ENCODE measurements at regions of chr15 and their contacts with region 1.

Region 1: GRCh38 chr15:80970018-80970658 is 19.5 kb downstream of the MESD start:
- H3K4me3 ChIP-seq: no peak overlapping the region
- H3K27ac ChIP-seq: no peak overlapping the region
- H3K4me1 ChIP-seq: no peaks in the 10 kb centered on the region
- CTCF ChIP-seq: peak; percentile 42; the same call in 1 of the 2 replicates

Region 2: DNA sequence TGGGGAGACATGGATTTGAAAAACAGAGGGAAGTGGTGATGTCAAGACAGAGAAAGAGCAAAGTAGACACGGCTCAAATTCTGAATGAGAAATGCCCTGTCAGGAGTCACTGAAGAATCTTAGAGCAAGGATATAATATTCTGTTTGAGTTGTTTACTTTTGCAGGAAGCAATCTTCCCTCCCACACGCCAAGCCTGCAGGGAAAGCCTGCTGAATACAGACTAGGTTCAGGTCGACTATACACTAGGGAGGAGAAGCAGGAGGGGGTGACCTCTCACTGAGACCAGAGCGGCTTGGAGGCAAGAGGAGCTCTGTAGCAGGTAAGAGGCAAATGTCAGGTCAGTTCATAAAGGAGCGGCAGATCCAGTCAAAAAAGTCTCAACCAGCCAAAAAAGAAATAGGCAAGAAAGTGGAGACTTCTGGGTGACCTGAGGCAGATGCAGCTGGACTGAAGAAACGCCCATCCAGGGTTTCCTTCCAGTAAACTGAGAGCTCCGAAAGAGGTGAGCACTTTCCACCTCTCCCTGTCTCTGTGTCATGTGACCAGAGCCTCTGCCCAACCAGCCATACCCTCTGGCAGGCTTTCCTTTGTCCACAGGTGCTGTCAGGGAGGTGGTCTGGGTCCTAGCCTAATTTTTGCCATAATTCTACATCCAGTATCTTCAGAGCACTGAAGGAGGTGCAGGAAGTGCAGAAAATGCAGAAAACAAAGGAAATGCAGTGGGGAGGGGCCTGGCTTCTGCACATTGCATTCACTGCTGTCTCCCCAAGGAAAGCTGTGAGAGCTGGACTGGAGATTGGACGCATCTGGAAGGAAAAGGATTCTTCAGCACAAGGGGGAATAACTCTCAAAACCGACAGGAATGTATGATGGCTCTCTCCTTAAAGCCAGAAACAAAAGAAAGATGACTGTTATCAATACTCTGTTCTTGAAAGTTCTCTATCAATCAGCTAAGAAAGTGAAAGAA is 680.3 kb before region 1 on chr15:
- CTCF ChIA-PET with region 1: no interaction called
- POLR2A ChIA-PET with region 1: no interaction called
- H3K4me3 ChIP-seq: no peak overlapping the region
- H3K27ac ChIP-seq: no peak overlapping the region
- H3K4me1 ChIP-seq: no peaks in the 10 kb centered on the region
- CTCF ChIP-seq: no peak

Region 3: GRCh38 chr15:80660122-80660521 is 310.0 kb before region 1 on chr15:
- CTCF ChIA-PET with region 1: interaction called, 14 read pairs
- POLR2A ChIA-PET with region 1: no interaction called
- H3K4me3 ChIP-seq: no peak overlapping the region
- H3K27ac ChIP-seq: no peak overlapping the region
- H3K4me1 ChIP-seq: no peaks in the 10 kb centered on the region
- CTCF ChIP-seq: 0 out of 2 replicates have a peak, but pooled peaks have one; percentile 18

Region 4: DNA sequence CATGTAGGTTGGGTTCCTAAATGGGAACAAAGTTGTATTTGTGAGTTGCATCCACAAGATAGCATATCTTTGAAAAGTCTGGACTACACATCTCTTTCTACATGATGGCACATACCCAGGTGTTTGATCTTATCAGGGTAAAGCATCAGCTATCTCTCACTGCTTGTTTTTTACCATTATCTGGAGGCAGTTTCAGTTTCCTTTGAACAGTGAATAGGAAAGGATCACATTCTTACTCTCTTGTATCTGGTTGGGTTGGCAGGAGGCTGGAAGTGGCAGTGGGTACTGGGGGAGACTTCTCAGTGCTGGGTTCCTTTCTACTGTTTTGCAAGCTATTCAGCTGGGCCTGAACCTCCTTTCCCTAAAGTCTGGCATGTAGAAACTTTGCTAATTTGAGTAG is 186.9 kb before region 1 on chr15:
- CTCF ChIA-PET with region 1: interaction called, 137 read pairs
- POLR2A ChIA-PET with region 1: interaction called, 8 read pairs
- H3K4me3 ChIP-seq: no peak overlapping the region
- H3K27ac ChIP-seq: no peak overlapping the region
- H3K4me1 ChIP-seq: peaks cover 13% of the 10 kb centered on the region
- CTCF ChIP-seq: no peak

Region 5: GRCh38 chr15:80957556-80957955 is 12.6 kb before region 1 on chr15:
- CTCF ChIA-PET with region 1: interaction called, 22 read pairs
- POLR2A ChIA-PET with region 1: interaction called, 3 read pairs
- H3K4me3 ChIP-seq: no peak overlapping the region
- H3K27ac ChIP-seq: no peak overlapping the region
- H3K4me1 ChIP-seq: peaks cover 3% of the 10 kb centered on the region; the same call in 1 of the 2 replicates
- CTCF ChIP-seq: no peak

Measured in HEK293 (cell line).